Aorta (tissue), 5 donors: ENCODE measurements at regions of chr3 and their contacts with region 1.

Region 1: GRCh38 chr3:48798998-48799397 is 48.7 kb downstream of the PRKAR2A start:
- DNase-seq: no peak
- ATAC-seq: no peak
- H3K4me3 ChIP-seq: no peak overlapping the region
- H3K27ac ChIP-seq: no peak overlapping the region
- H3K4me1 ChIP-seq: no peaks in the 10 kb centered on the region
- H3K27me3 ChIP-seq: no peaks in the 10 kb centered on the region

Region 2: GRCh38 chr3:48609088-48610005 is 189.7 kb before region 1 on chr3 and contains the start of gene UQCRC1:
- intact Hi-C with region 1: no loop called
- DNase-seq: peak; percentile 95 to 98
- ATAC-seq: peak; percentile 100
- H3K4me3 ChIP-seq: peak within 1 kb of the TSS; percentile 80 to 93
- H3K27ac ChIP-seq: peak within 1 kb of the TSS in 1 of 2 donors; percentile 37
- H3K4me1 ChIP-seq: peaks cover 0 to 3% of the 10 kb centered on the region in 2 donors
- H3K27me3 ChIP-seq: no peaks in the 10 kb centered on the region
- total RNA-seq, gene UQCRC1: 95.6 to 143 TPM

Region 3: DNA sequence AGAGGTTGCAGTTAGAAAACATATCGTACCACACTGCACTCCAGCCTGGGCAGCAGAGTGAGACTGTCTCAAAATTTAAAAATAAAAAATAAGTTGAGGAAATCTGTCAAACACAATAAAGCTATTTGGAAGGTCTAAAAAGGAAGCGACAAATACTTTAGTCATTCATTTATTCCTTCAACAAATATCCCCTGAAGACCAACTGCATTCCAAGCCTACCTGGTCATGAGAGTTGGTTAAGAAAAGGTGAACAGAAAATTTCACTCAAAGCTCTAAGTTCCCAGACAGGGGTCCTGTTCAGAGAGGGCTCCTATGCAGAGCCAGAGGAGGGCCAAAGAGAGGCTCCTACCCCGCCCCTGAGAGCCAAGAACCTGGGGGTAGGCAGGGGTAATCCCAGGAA is 64.1 kb after region 1 on chr3:
- intact Hi-C with region 1: loop called in 1 of 2 experiments (anchors 2 kb)
- DNase-seq: peak in 1 of 2 donors; percentile 11
- ATAC-seq: no peak
- H3K4me3 ChIP-seq: no peak overlapping the region
- H3K27ac ChIP-seq: no peak overlapping the region
- H3K4me1 ChIP-seq: no peaks in the 10 kb centered on the region
- H3K27me3 ChIP-seq: no peaks in the 10 kb centered on the region